ENCODE measurements at regions of chr7 and their contacts with region 1.

Region 1: GRCh38 chr7:32212321-32212720 is 142.1 kb upstream of the PDE1C start:
- DNase-seq: no peak
- H3K27ac ChIP-seq: no peak overlapping the region
- CTCF ChIP-seq: no peak

Region 2: GRCh38 chr7:32479574-32480200 is 267.4 kb after region 1 on chr7:
- CTCF ChIA-PET with region 1: interaction called, 16 read pairs
- POLR2A ChIA-PET with region 1: no interaction called
- DNase-seq: peak; percentile 55
- H3K27ac ChIP-seq: no peak overlapping the region
- CTCF ChIP-seq: peak; percentile 95

Region 3: DNA sequence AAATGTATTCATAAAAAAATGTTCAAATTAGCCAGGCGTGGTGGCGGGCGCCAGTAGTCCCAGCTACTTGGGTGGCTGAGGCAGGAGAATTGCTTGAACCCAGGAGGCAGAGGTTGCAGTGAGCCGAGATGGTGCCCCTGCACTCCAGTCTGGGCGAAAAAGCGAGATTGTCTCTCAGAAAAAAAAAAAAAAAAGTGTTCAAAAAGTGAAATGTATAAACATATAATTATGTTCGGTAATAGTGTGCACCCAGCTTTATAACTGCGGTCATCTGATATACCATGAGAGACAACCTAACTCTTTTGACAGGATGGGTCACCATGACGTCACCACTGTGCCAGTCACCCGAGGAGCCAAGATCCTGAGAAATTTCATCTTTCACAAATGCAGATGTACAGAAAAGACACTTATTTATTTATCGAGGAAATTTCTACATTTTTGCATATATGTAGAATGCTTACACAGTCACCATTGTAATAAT is 897.5 kb after region 1 on chr7:
- CTCF ChIA-PET with region 1: no interaction called
- POLR2A ChIA-PET with region 1: no interaction called
- DNase-seq: no peak
- H3K27ac ChIP-seq: peak overlapping the region; percentile 76
- CTCF ChIP-seq: no peak; the same call in 1 of the 2 replicates

Region 4: DNA sequence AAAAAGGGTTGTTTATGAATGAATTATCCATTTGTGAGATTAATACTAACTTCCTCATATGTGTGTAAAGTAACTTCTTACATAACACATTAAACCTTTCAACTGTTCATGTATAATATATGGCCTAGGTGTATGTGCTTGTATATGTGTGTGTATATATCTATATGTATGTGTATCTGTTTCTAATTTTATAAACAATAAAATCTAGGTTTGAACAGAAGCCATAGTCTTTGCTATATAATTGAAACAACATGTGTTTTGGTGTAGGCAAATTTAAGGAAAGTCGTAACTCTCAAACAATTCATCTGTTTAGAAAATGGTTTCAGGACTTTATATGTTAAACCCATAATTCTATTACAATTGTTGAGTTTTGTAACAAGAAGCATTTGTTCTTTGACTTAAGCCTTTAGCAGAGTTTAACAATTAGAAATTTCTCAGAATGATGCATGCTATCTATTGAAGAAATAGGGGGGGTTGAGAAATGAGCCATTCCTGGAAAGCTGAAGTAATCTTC is 1020.4 kb after region 1 on chr7:
- CTCF ChIA-PET with region 1: no interaction called
- POLR2A ChIA-PET with region 1: no interaction called
- DNase-seq: no peak
- H3K27ac ChIP-seq: no peak overlapping the region
- CTCF ChIP-seq: no peak

Measured in RWPE1 (cell line).